KBM-7 (cell line): ENCODE measurements at regions of chr14 and their contacts with region 1.

Region 1: DNA sequence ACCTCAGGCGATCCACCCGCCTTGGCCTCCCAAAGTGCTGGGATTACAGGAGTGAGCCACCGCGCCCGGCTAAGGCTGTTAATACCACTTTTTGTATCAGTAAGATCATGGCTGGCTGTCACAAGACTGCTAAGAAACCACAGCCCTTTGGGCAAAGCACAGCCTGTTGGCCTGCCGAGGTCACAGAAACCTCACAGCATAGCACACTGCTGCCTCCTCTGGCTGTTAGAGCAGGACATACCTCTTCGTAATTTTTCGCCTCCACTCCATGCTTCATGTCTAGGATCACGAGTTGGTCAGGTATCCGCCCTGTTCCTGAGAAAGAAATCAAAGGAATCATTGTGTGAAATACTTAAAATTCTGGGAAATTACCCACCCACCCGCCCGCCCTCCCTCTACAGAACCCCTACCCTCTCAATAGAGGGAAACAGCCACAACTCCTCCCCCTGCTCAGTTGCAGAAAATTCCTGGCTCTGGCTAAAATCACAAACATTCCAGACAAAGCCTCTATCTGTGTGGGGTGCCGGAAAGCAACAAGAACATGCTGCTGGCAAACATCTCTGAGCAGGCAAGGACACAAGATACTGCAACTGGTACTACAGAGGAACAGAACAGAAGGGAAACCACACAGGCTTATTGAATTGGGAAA is 20.7 kb upstream of the NEK9 start:
- DNase-seq: no peak

Region 2: GRCh38 chr14:75293920-75294642 is 146.5 kb after region 1 on chr14:
- in situ Hi-C with region 1: loop called (anchors 10 kb)
- DNase-seq: peak; percentile 95